MCF 10A (cell line): ENCODE measurements at regions of chr1 and their contacts with region 1.

Region 1: DNA sequence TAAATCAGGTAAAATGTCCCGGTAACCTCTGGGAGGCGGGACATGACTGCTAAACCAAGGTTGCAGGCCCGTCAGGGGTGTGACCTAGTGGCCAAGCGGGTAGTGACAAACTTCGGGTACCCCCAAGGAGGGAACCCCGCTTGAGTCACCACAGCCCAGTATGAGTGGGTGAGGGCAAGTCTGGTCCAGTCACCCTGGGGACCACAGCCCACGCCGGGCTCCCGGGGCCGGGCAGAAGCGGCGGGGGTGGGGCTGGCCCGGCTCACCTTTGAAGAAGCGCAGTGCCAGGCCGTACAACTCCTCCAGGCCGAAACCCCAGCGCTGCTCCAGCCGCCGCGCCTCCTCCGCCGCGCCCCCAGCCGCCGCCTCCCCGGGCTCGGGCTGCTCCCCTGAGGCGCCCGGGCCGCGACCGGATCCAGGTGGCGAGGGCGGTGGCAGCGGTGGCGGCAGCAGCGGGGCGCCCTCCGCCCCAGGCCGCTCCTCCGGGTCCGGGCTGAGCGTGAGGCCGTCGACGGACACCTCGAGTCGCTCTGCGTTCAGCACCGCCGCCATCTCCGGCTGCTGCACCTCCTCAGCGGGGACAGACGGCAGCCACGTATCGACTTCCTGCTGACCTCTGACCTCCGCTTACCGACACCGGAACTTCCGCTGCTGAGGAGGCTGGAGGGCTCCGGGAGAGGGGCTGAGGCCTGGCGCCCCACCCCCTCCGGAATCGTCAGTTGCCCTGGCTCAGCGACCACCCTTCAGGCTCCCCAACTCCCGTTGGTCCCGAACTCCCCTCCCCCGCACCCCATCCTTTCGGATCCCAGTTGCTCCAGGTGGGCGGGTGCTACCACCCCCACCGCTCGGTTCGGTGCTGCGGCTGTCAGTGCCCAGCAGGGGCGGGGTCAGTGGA is at the start of gene ACBD3:
- DNase-seq: peak; percentile 91
- H3K4me3 Mint-ChIP-seq: peak within 1 kb of the TSS; percentile 93
- H3K27ac Mint-ChIP-seq: peak within 1 kb of the TSS; percentile 93
- H3K4me1 Mint-ChIP-seq: peaks cover 35% of the 10 kb centered on the region
- H3K27me3 Mint-ChIP-seq: no peaks in the 10 kb centered on the region
- CTCF ChIP-seq: no peak
- total RNA-seq, gene ACBD3: 93.9 and 122 TPM in 2 replicates

Region 2: GRCh38 chr1:226128487-226129075 is 57.8 kb before region 1 on chr1:
- CTCF ChIA-PET with region 1: interaction called, 153 read pairs
- POLR2A ChIA-PET with region 1: interaction called, 56 read pairs
- intact Hi-C with region 1: no loop called
- DNase-seq: peak; percentile 57
- H3K4me3 Mint-ChIP-seq: peak overlapping the region; percentile 21
- H3K27ac Mint-ChIP-seq: peak overlapping the region; percentile 73
- H3K4me1 Mint-ChIP-seq: peaks cover 42% of the 10 kb centered on the region
- H3K27me3 Mint-ChIP-seq: no peaks in the 10 kb centered on the region
- CTCF ChIP-seq: no peak

Region 3: DNA sequence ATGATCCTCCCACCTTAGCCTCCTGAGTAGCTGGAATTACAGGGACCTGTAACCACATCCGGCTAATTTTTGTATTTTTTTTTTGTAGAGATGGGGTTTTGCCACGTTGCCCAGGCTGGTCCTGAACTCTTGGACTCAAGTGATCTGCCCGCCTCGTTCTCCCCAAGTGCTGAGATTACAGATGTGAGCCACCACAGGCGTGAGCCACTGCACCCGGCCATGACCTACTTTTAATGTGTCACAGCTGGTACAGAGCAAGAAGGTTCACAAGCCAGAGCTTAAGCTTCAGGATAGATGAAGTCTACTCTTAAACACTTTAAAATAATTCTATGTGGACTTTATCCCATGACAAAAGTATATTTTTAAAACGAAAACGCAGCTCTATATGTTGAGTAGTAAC is 23.5 kb before region 1 on chr1:
- CTCF ChIA-PET with region 1: interaction called, 12 read pairs
- POLR2A ChIA-PET with region 1: interaction called, 5 read pairs
- intact Hi-C with region 1: no loop called
- DNase-seq: no peak
- H3K4me3 Mint-ChIP-seq: no peak overlapping the region
- H3K27ac Mint-ChIP-seq: no peak overlapping the region
- H3K4me1 Mint-ChIP-seq: no peaks in the 10 kb centered on the region
- H3K27me3 Mint-ChIP-seq: no peaks in the 10 kb centered on the region
- CTCF ChIP-seq: no peak

Region 4: DNA sequence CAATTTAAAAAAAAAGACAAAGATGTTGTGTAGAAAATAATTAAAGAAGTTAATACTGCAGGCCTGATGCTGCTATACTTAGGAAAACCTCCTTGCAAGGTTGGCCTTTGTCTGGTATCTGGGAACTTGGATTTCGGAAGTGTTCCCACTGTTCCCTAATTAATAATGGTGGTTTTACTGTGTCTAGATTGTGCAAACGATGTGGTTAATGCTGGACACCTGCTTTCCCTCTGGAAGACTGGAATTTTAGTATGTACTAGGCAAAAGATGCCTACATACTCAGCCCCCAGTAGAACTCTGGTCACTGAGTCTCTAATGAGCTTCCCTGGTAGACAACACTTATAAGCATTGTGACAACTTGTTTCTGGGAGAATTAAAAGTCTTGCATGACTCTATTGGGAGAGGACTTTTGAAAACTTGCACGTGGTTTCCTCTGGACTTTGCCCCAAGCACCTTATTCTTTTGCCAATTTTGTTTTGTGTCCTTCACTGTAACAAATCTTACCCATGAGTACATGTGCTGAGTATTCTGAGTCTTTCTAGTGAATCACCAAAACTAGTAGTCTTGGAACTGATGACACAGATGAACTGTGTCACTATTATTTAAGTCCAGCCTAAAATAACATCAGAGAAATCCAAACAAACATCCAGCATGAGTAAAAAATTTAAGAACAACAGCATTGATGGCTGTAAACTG is 82.2 kb after region 1 on chr1:
- CTCF ChIA-PET with region 1: no interaction called
- POLR2A ChIA-PET with region 1: interaction called, 14 read pairs
- intact Hi-C with region 1: no loop called
- DNase-seq: peak; percentile 83
- H3K4me3 Mint-ChIP-seq: no peak overlapping the region
- H3K27ac Mint-ChIP-seq: peak overlapping the region; percentile 65
- H3K4me1 Mint-ChIP-seq: peaks cover 26% of the 10 kb centered on the region
- H3K27me3 Mint-ChIP-seq: no peaks in the 10 kb centered on the region
- CTCF ChIP-seq: no peak

Region 5: DNA sequence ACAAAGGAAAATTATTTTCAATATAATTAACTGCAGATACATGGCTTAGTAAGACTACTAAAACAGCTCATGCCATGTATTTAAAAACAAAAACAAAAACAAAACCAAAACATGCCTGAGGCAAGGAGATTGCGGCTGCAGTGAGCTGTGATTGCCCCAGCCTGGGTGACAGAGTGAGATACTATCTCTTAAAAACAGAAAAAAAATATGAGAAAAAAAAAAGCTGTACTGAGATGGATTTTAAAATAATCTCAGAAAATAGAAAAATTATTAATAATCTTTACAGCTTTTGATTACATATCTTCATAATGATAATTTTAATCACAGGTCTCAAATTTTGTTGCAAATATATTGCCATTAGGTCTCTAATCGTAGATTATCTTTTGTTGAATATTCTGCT is 146.6 kb after region 1 on chr1:
- CTCF ChIA-PET with region 1: interaction called, 21 read pairs
- POLR2A ChIA-PET with region 1: interaction called, 11 read pairs
- intact Hi-C with region 1: no loop called
- DNase-seq: no peak
- H3K4me3 Mint-ChIP-seq: peak overlapping the region; percentile 9
- H3K27ac Mint-ChIP-seq: no peak overlapping the region
- H3K4me1 Mint-ChIP-seq: peaks cover 6% of the 10 kb centered on the region
- H3K27me3 Mint-ChIP-seq: no peaks in the 10 kb centered on the region
- CTCF ChIP-seq: no peak

Region 6: DNA sequence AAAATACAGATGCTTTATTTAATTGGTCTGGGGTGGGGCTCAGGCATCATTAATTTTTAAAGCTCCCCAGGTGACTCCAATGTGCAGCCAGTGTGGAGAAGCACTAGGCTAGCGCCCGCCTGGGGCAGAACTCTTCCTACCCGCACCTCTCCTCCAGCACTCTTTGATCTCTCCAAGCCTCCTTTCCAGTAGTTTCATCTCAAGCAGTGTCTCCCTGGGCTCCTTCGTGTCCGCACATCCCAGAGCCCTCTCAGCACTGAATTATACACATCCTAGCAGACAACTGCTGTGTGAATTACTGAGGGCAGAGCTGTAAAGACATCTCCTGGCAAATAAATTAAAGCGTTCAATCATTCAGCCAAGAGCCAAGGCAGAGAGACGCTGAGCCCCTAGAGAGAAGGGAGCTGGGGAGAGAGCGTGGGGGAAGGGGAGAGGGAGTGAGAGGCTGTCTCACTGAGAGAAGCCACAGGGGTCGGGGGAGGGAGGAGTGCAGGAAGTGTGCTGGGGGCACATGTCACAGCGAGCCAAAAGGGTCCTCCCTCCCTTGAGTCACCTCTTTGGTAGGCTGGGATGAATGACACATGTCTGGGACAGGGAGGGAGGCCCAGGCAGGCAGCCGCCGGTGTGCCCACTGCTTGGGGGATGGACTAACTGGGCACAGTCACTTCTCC is 242.6 kb after region 1 on chr1:
- CTCF ChIA-PET with region 1: no interaction called
- POLR2A ChIA-PET with region 1: no interaction called
- intact Hi-C with region 1: no loop called
- DNase-seq: no peak
- H3K4me3 Mint-ChIP-seq: no peak overlapping the region
- H3K27ac Mint-ChIP-seq: no peak overlapping the region
- H3K4me1 Mint-ChIP-seq: no peaks in the 10 kb centered on the region
- H3K27me3 Mint-ChIP-seq: no peaks in the 10 kb centered on the region
- CTCF ChIP-seq: no peak